ENCODE measurements at regions of chr12 and their contacts with region 1.

Region 1: DNA sequence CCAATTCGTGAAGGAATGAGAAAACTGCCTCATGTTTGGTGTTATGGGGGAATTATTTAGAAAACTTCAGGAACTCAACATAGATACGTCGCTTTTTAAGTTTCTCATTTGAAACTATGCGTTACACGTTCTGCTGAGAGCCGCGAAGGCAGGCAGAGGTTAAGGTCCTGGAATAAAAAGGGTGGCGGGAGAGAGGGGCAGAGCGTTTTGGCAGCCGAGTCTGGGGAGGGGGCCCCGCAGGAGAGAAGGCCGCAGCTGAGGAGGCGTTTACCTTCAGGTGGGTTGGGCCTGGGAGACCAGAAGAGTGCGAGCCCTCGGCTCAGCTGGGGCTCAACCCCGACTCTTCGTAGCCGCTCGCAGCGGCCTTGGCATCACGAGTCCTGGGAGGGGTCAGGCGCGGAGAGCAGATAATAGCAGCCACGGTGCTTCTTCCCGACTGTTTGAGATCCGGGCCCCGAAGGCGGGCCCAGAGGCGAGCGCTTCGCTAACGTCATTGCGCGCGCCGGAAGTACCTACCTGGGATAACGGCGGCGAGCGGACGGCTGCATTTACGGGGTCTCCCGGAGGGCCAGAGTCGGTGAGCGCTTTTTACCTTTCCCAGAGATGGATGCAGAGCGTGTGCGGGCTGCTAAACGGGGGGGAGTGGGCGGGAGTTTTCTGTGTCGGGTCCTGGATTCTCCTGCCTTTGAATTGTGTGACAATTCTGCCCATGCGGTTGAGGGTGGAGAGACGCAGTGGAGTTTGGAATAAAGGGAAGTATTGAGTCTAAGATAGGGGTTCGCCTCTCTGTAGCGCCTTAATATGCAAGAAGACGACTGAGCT is at the starts of genes PPHLN1 and ZCRB1:
- DNase-seq: peak; percentile 83 to 94
- H3K4me3 ChIP-seq: peak within 1 kb of the TSS; percentile 68 to 87 (median 82)
- H3K27ac ChIP-seq: peak within 1 kb of the TSS; percentile 85 to 96 (median 93)
- H3K4me1 ChIP-seq: peaks cover 18 to 68% (median 51%) of the 10 kb centered on the region in 4 donors
- H3K27me3 ChIP-seq: no peaks in the 10 kb centered on the region
- CTCF ChIP-seq: no peak
- EP300 ChIP-seq: no peak
- POLR2A ChIP-seq: no peak
- total RNA-seq, gene PPHLN1: 29.8 to 213 (median 99.5) TPM
- total RNA-seq, gene ZCRB1: 0.58 to 46.1 (median 20.0) TPM

Region 2: DNA sequence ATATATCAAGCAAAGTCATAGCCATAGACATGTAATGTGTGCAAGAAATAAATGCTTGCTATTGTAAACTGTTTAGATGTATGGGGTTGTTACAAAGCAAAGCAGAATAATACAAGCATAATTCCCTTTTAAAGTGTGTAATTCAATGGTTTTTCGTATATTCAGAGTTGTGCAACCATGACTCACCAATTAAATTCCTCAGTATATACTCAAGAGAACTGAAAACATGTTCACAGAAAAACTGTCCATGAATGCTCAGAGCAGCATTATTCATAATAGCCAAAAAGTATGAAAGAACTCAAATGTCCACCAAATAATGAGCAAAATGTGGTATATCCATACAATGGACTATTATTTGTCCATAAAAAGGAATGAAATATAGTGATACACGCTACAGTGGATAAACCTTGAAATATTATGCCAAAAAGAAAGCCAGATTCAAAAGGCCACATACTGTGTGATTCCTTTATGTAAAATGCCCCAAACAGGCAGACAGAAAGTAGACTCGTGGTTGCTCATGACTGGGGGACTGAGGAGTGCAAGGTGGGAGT is 190.5 kb before region 1 on chr12:
- intact Hi-C with region 1: loop called (anchors 5 kb)
- DNase-seq: no peak
- H3K4me3 ChIP-seq: no peak overlapping the region
- H3K27ac ChIP-seq: no peak overlapping the region
- H3K4me1 ChIP-seq: peaks cover 0 to 21% (median 12%) of the 10 kb centered on the region in 4 donors
- H3K27me3 ChIP-seq: no peaks in the 10 kb centered on the region
- CTCF ChIP-seq: no peak
- EP300 ChIP-seq: no peak
- POLR2A ChIP-seq: no peak

Region 3: DNA sequence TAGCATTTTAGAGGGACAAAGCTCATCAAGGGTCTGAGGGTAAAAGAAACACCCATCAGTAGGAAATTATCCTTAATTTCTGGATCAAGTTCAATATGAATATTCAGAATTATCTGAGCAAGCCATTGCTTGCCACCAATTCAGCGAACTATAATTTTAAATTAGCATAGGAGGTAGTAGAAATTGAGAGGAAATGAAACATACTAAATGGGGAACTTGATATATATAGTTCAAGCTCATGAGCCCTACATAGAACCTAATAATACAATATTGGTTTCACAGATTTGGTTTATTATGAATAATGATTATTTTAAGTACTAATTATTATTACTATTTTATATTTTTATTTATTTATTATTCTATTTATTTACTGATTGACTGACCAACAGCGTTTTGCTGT is 139.1 kb before region 1 on chr12:
- intact Hi-C with region 1: no loop called
- DNase-seq: no peak
- H3K4me3 ChIP-seq: no peak overlapping the region
- H3K27ac ChIP-seq: no peak overlapping the region
- H3K4me1 ChIP-seq: peaks cover 0 to under 1% (median 0%) of the 10 kb centered on the region in 4 donors
- H3K27me3 ChIP-seq: no peaks in the 10 kb centered on the region
- CTCF ChIP-seq: no peak
- EP300 ChIP-seq: no peak
- POLR2A ChIP-seq: no peak

Region 4: GRCh38 chr12:42237052-42237852 is 88.6 kb before region 1 on chr12:
- intact Hi-C with region 1: loop called (anchors 10 kb)
- DNase-seq: peak; percentile 79 to 93
- H3K4me3 ChIP-seq: peak overlapping the region; percentile 72 to 98 (median 92)
- H3K27ac ChIP-seq: peak overlapping the region; percentile 91 to 100 (median 94)
- H3K4me1 ChIP-seq: peaks cover 19 to 55% (median 31%) of the 10 kb centered on the region in 4 donors
- H3K27me3 ChIP-seq: no peaks in the 10 kb centered on the region
- CTCF ChIP-seq: peak in 4 of 7 experiments; percentile 21 to 37 (median 25)
- EP300 ChIP-seq: no peak
- POLR2A ChIP-seq: no peak

Region 5: DNA sequence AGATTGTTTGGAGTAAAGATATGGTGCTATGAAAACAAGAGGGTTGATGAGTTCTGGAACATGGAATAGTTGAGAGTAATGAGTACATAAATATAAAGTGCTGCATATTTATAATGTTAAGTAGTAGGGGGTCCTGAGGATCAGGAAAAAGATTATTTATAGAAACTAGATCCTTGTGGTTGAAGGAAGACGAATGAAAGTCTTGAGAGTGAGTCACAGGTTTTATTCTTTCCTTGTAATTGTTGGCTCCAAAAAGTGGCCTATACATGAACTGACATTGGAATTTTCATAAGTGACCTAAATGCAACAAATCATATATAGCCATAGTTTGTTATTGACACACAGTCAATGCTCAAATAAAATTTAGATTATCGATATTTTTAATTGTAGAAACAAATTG is 704.1 kb after region 1 on chr12:
- intact Hi-C with region 1: no loop called
- DNase-seq: no peak
- H3K4me3 ChIP-seq: no peak overlapping the region
- H3K27ac ChIP-seq: no peak overlapping the region
- H3K4me1 ChIP-seq: no peaks in the 10 kb centered on the region
- H3K27me3 ChIP-seq: no peaks in the 10 kb centered on the region
- CTCF ChIP-seq: no peak
- EP300 ChIP-seq: no peak
- POLR2A ChIP-seq: no peak